ENCODE measurements at regions of chr15 and their contacts with region 1.

Region 1: GRCh38 chr15:82849556-82850512 is 40.4 kb downstream of the WHAMM start:
- DNase-seq: no peak
- ATAC-seq: peak; percentile 82
- H3K4me3 ChIP-seq: no peak overlapping the region
- H3K27ac ChIP-seq: no peak overlapping the region
- H3K4me1 ChIP-seq: no peaks in the 10 kb centered on the region
- H3K27me3 ChIP-seq: peaks cover 0 to 5% of the 10 kb centered on the region in 2 experiments; a peak in 1 of 4 replicates
- CTCF ChIP-seq: peak; percentile 64; a peak in 5 of 6 replicates
- EP300 ChIP-seq: no peak
- POLR2A ChIP-seq: no peak
- RAD21 ChIP-seq: peak; percentile 78

Region 2: DNA sequence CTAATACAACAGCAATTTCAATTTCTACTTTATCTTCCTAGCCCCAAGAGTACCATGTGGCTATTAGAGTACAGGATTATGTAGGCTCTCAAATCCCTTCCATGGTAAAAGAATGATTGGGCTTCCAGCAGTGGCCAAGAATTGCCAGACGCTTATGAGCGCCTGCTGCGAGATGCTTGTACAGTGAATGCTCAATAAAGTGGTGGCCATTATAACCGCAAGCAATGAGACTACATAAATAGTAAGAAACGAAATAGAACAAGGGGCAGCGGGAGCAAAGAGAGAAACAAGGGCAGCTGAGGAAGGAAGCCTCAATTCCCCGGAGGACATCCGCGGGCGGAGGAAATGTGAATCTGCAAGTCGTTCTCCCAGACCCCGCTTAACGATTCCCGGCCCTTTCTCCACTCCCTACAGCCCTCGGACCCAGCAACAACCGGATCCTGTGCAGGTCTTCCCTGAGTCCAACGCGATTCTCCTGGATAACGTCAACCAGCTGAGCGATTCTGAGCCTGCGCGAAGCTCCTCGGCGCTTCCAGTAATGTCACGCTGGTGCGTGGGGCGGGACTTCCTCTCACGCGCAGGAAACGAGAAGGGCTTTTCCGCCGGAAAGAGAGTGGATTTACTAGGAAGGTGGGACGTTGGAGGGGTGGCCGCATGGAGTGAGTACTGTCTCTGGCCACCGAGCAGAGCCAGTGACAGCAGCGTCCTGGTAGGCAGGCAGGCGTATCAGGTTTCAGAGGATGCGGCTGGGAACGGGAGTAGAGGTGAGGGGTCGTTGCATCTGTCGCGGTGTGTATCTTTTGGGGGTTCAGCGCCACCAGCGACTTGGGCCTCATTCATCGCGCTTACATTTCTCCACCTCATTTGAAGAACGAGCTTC is 99.6 kb before region 1 on chr15:
- CTCF ChIA-PET with region 1: no interaction called
- POLR2A ChIA-PET with region 1: no interaction called
- RAD21 ChIA-PET with region 1: no interaction called
- SMC1A ChIA-PET with region 1: no interaction called
- in situ Hi-C with region 1: no loop called
- intact Hi-C with region 1: loop called (anchors 10 kb)
- DNase-seq: peak; percentile 57
- ATAC-seq: peak; percentile 96
- H3K4me3 ChIP-seq: peak overlapping the region; percentile 87
- H3K27ac ChIP-seq: peak overlapping the region; percentile 90
- H3K4me1 ChIP-seq: peaks cover 7% of the 10 kb centered on the region; the same call in 1 of the 2 replicates
- H3K27me3 ChIP-seq: no peaks in the 10 kb centered on the region
- CTCF ChIP-seq: no peak
- EP300 ChIP-seq: 0 out of 4 replicates have a peak, but pooled peaks have one; percentile 15 to 17
- POLR2A ChIP-seq: peak; percentile 96
- RAD21 ChIP-seq: no peak

Region 3: DNA sequence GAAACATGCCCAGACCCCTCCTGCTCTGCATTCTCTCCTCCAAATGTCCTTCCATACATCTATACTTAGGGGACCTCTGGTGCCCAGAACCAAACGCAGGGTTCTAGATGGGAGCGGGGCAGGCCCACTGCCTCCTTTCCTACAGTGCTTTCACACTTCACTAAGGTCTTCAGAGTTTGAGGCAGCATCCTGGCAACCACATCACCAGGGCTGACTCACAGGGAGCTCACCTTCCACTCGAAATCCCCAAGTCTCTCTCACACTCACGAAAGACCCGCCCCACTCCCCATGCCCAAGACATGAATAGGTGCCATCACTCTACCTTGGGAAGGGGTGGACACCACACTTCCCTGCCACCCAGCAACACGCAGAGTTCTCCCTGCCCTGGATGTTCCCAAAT is 83.7 kb after region 1 on chr15:
- CTCF ChIA-PET with region 1: no interaction called
- POLR2A ChIA-PET with region 1: no interaction called
- RAD21 ChIA-PET with region 1: no interaction called
- SMC1A ChIA-PET with region 1: no interaction called
- in situ Hi-C with region 1: no loop called
- intact Hi-C with region 1: no loop called
- DNase-seq: no peak
- ATAC-seq: no peak
- H3K4me3 ChIP-seq: no peak overlapping the region
- H3K27ac ChIP-seq: no peak overlapping the region
- H3K4me1 ChIP-seq: no peaks in the 10 kb centered on the region
- H3K27me3 ChIP-seq: peaks cover 0 to 1% of the 10 kb centered on the region in 2 experiments; a peak in 2 of 4 replicates
- CTCF ChIP-seq: no peak
- EP300 ChIP-seq: no peak
- POLR2A ChIP-seq: no peak
- RAD21 ChIP-seq: no peak

Region 4: GRCh38 chr15:82985688-82986441 is 136.0 kb after region 1 on chr15 and contains the start of gene RAMAC:
- CTCF ChIA-PET with region 1: interaction called, 5 read pairs
- POLR2A ChIA-PET with region 1: interaction called, 3 read pairs
- RAD21 ChIA-PET with region 1: interaction called, 3 read pairs
- SMC1A ChIA-PET with region 1: interaction called, 11 read pairs
- in situ Hi-C with region 1: no loop called
- intact Hi-C with region 1: no loop called
- DNase-seq: peak; percentile 93
- ATAC-seq: peak; percentile 97
- H3K4me3 ChIP-seq: peak within 1 kb of the TSS; percentile 84
- H3K27ac ChIP-seq: peak within 1 kb of the TSS; percentile 71
- H3K4me1 ChIP-seq: peaks cover 8% of the 10 kb centered on the region
- H3K27me3 ChIP-seq: no peaks in the 10 kb centered on the region
- CTCF ChIP-seq: no peak
- EP300 ChIP-seq: no peak
- POLR2A ChIP-seq: peak; percentile 88
- RAD21 ChIP-seq: no peak
- polyA plus RNA-seq, gene RAMAC: 79.3 to 109 TPM

Measured in GM12878 (cell line).